ENCODE measurements at regions of chr4 and their contacts with region 1.

Region 1: GRCh38 chr4:129093191-129093920 is at the start of gene SCLT1:
- DNase-seq: peak; percentile 99
- ATAC-seq: peak; percentile 92
- H3K4me3 Mint-ChIP-seq: no peak within 1 kb of the TSS
- H3K27ac Mint-ChIP-seq: peak within 1 kb of the TSS; percentile 32
- H3K4me1 Mint-ChIP-seq: peaks cover 39% of the 10 kb centered on the region
- H3K27me3 Mint-ChIP-seq: no peaks in the 10 kb centered on the region
- CTCF ChIP-seq: no peak
- total RNA-seq, gene SCLT1: 18.5 to 19.7 TPM

Region 2: GRCh38 chr4:128287871-128288688 is 805.3 kb before region 1 on chr4:
- CTCF ChIA-PET with region 1: no interaction called
- POLR2A ChIA-PET with region 1: no interaction called
- intact Hi-C with region 1: loop called (anchors 10 kb)
- DNase-seq: peak; percentile 100
- ATAC-seq: peak; percentile 91
- H3K4me3 Mint-ChIP-seq: peak overlapping the region; percentile 81
- H3K27ac Mint-ChIP-seq: peak overlapping the region; percentile 89
- H3K4me1 Mint-ChIP-seq: peaks cover 30% of the 10 kb centered on the region
- H3K27me3 Mint-ChIP-seq: no peaks in the 10 kb centered on the region
- CTCF ChIP-seq: no peak

Region 3: GRCh38 chr4:129109965-129110824 is 16.8 kb after region 1 on chr4:
- CTCF ChIA-PET with region 1: interaction called, 10 read pairs
- POLR2A ChIA-PET with region 1: interaction called, 3 read pairs
- intact Hi-C with region 1: no loop called
- DNase-seq: no peak
- ATAC-seq: no peak
- H3K4me3 Mint-ChIP-seq: no peak overlapping the region
- H3K27ac Mint-ChIP-seq: no peak overlapping the region
- H3K4me1 Mint-ChIP-seq: no peaks in the 10 kb centered on the region
- H3K27me3 Mint-ChIP-seq: no peaks in the 10 kb centered on the region
- CTCF ChIP-seq: no peak